Activated CD4-positive, alpha-beta T cell treated with anti-CD3 and anti-CD28 coated beads, Interleukin-2, amount 10 ng/mL, durations not matched to agents 24 days and 14 days (primary cell): ENCODE measurements at regions of chr12 and their contacts with region 1.

Region 1: DNA sequence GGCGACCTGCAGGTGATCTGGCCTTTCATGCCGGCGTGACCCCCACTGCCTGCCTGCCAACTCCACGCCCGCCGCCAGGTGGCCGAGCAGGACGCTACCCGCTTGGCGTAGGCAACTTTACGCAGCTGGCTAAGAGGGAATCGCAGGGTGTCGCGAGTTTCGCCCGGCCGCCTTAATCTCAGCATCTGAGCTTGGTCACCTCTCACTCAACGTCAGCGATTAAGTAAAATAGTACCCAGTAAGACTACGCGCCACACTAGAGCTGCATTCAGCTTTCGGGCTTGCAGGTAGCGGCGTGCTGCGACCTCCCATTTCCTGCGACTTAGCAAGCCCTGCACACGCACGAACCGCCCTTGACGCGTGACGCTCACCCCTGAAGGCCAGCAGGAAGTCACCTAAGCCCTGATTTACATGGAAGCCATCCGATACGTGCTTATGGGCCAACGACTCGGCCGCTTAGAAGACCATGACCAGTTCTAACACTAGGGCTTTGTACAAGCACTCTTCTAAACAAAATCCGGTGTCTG is 33.2 kb downstream of the WBP11 start:
- DNase-seq: peak; percentile 95
- H3K4me3 Mint-ChIP-seq: peak overlapping the region; percentile 96
- H3K27ac Mint-ChIP-seq: peak overlapping the region; percentile 99
- H3K4me1 Mint-ChIP-seq: peaks cover 51% of the 10 kb centered on the region
- H3K27me3 Mint-ChIP-seq: no peaks in the 10 kb centered on the region

Region 2: GRCh38 chr12:14216405-14217294 is 553.4 kb before region 1 on chr12:
- intact Hi-C with region 1: loop called (anchors 5 kb)
- DNase-seq: no peak
- H3K4me3 Mint-ChIP-seq: peak overlapping the region; percentile 23
- H3K27ac Mint-ChIP-seq: no peak overlapping the region
- H3K4me1 Mint-ChIP-seq: peaks cover 13% of the 10 kb centered on the region
- H3K27me3 Mint-ChIP-seq: no peaks in the 10 kb centered on the region

Region 3: DNA sequence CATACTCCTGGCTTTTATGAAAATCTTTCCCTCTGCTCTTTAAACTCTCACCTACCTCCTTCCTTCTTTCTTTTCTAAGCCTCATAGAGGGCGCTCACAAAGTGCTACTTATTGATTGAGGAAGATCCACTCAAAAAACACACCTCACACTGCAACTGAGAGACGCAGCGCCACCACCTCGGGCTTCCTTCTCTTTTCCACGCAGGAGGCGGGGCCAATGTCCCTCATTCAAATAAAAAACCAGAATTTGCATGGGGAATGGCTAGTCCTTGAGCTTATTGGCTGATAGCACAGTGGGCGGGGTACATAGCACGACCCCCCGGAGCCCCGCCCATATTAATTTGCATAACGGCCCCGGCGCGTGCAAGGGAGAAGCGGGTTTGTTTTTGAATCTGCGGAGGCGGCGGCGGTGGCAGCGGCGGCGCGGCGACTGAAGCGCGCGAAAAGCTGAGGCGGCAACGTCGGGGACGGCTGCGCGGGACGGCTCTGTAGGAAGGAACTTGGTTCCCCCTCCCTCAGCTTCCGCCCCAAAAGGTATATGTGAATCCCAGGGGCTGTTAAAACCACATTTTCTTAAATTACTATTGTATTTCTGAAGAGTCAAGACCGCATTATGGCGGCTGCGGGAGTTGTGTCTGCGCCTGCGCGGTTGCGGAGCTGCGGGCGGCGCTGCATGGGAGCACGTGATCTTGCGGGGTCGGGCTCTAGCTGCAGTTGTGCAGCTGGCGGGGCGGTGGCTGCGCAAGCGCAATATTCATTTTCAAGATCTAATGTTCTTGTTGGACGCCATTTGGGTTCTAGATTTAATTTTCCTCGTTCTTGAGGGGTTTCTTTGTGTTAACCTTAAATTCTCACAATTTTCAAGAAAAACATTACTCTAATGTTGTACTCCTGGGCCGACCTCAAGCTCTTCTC is 404.5 kb before region 1 on chr12 and contains the start of gene ATF7IP:
- intact Hi-C with region 1: loop called (anchors 1 kb)
- DNase-seq: peak; percentile 99
- H3K4me3 Mint-ChIP-seq: peak within 1 kb of the TSS; percentile 82
- H3K27ac Mint-ChIP-seq: peak within 1 kb of the TSS; percentile 95
- H3K4me1 Mint-ChIP-seq: peaks cover 37% of the 10 kb centered on the region
- H3K27me3 Mint-ChIP-seq: no peaks in the 10 kb centered on the region
- total RNA-seq, gene ATF7IP: 62.6 and 72.4 TPM in 2 replicates

Region 4: DNA sequence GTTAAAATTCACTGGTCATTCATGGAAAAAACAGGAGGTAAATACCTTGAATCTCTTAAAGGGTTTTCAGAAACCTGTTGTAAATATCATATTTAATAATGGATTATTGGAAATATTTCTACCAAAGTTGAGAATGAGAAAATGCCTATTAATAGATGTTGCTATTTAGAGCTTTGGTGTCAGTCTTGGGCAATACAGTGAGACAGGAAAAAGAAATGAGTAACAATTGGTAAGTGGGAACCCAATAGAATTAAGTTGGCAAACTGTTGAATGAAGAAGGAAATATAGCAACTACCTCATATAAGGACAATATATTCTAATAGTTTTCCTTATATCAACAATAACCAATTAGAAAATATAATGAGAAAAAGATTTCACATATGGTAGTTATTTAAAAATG is 326.5 kb before region 1 on chr12:
- intact Hi-C with region 1: no loop called
- DNase-seq: no peak
- H3K4me3 Mint-ChIP-seq: no peak overlapping the region
- H3K27ac Mint-ChIP-seq: no peak overlapping the region
- H3K4me1 Mint-ChIP-seq: peaks cover 7% of the 10 kb centered on the region
- H3K27me3 Mint-ChIP-seq: no peaks in the 10 kb centered on the region

Region 5: DNA sequence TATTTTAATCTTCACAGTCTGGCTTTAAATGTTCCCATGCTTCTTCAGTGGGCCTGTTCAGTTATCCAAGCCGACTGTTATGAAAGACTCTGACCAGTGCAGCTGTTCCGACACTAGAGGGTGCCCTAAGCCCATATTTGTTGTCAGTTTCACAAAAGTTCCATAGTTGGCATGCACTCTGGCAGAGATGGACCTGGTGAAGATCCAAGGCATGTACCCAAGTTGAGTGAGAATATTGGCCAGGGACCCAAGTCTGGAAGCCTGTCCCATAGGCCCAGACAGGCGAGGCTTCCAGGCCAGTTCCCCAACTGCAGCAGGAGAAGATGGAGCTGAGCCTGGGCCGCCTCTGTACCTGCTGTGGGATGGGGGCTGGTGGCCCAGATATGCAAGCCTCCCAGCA is 46.3 kb before region 1 on chr12:
- intact Hi-C with region 1: loop called (anchors 1 kb)
- DNase-seq: peak; percentile 87
- H3K4me3 Mint-ChIP-seq: no peak overlapping the region
- H3K27ac Mint-ChIP-seq: no peak overlapping the region
- H3K4me1 Mint-ChIP-seq: peaks cover 2% of the 10 kb centered on the region
- H3K27me3 Mint-ChIP-seq: peaks cover 21% of the 10 kb centered on the region

Region 6: GRCh38 chr12:14756334-14757143 is 13.5 kb before region 1 on chr12:
- intact Hi-C with region 1: no loop called
- DNase-seq: no peak
- H3K4me3 Mint-ChIP-seq: no peak overlapping the region
- H3K27ac Mint-ChIP-seq: no peak overlapping the region
- H3K4me1 Mint-ChIP-seq: peaks cover 10% of the 10 kb centered on the region
- H3K27me3 Mint-ChIP-seq: no peaks in the 10 kb centered on the region

Region 7: GRCh38 chr12:14858513-14858912 is 88.5 kb after region 1 on chr12:
- intact Hi-C with region 1: no loop called
- DNase-seq: no peak
- H3K4me3 Mint-ChIP-seq: no peak overlapping the region
- H3K27ac Mint-ChIP-seq: no peak overlapping the region
- H3K4me1 Mint-ChIP-seq: no peaks in the 10 kb centered on the region
- H3K27me3 Mint-ChIP-seq: peaks cover 2% of the 10 kb centered on the region

Region 8: DNA sequence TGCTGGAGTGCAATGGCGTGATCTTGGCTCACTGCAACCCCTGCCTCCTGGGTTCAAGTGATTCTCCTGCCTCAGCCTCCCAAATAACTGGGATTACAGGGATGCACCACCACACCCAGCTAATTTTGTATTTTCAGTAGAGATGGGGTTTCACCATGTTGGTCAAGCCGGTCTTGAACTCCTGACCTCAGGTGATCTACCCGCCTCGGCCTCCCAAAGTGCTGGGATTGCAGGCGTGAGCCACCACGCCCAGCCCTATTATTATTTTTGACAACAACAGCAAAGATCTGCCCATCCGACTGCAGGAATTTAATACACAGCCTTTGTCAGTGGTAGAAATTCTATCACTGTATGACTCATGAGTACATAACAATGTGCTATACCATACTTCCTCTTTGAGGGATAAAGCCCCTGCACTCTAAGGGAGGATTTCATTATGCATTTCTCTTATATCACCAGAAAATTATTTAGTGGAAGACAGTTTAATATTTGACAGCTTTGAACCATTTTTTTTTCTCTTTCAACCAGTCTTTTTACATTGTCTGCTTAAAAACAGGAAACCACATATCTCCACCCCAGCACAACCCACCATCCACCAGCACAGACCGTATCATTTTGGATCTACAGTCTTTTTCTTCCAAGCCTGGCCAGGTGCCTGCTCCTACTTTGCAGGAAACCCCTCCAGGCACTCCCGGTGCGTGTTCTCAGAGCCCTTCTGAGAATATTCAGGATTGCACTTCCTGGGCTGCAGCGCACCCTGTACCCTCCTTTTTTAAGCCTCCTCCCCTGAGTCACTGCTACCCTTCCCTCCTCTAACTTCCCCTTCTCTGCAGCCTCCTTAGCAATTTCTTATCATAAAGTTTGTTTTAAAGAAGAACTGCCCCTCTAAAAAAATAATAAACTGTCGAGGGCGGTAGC is 190.8 kb after region 1 on chr12:
- intact Hi-C with region 1: loop called (anchors 1 kb)
- DNase-seq: peak; percentile 85
- H3K4me3 Mint-ChIP-seq: peak overlapping the region; percentile 99
- H3K27ac Mint-ChIP-seq: peak overlapping the region; percentile 100
- H3K4me1 Mint-ChIP-seq: peaks cover 60% of the 10 kb centered on the region
- H3K27me3 Mint-ChIP-seq: no peaks in the 10 kb centered on the region

Region 9: GRCh38 chr12:15882118-15882971 is 1112.3 kb after region 1 on chr12 and contains the start of gene STRAP:
- intact Hi-C with region 1: loop called (anchors 2 kb)
- DNase-seq: peak; percentile 99
- H3K4me3 Mint-ChIP-seq: peak within 1 kb of the TSS; percentile 97
- H3K27ac Mint-ChIP-seq: peak within 1 kb of the TSS; percentile 94
- H3K4me1 Mint-ChIP-seq: peaks cover 39% of the 10 kb centered on the region
- H3K27me3 Mint-ChIP-seq: peaks cover 3% of the 10 kb centered on the region
- total RNA-seq, gene STRAP: 162 and 166 TPM in 2 replicates